Activated naive CD4-positive, alpha-beta T cell treated with anti-CD3 and anti-CD28 coated beads for 36 hours (primary cell): ENCODE measurements at regions of chr1 and their contacts with region 1.

Region 1: GRCh38 chr1:212035123-212035834 is at the starts of genes DTL and INTS7:
- DNase-seq: peak; percentile 99
- H3K4me3 Mint-ChIP-seq: peak within 1 kb of the TSS; percentile 96
- H3K27ac Mint-ChIP-seq: peak within 1 kb of the TSS; percentile 98
- H3K4me1 Mint-ChIP-seq: peaks cover 53% of the 10 kb centered on the region
- H3K27me3 Mint-ChIP-seq: peaks cover 6% of the 10 kb centered on the region
- total RNA-seq, gene DTL: 106 to 121 TPM
- total RNA-seq, gene INTS7: 24.7 to 25.9 TPM

Region 2: DNA sequence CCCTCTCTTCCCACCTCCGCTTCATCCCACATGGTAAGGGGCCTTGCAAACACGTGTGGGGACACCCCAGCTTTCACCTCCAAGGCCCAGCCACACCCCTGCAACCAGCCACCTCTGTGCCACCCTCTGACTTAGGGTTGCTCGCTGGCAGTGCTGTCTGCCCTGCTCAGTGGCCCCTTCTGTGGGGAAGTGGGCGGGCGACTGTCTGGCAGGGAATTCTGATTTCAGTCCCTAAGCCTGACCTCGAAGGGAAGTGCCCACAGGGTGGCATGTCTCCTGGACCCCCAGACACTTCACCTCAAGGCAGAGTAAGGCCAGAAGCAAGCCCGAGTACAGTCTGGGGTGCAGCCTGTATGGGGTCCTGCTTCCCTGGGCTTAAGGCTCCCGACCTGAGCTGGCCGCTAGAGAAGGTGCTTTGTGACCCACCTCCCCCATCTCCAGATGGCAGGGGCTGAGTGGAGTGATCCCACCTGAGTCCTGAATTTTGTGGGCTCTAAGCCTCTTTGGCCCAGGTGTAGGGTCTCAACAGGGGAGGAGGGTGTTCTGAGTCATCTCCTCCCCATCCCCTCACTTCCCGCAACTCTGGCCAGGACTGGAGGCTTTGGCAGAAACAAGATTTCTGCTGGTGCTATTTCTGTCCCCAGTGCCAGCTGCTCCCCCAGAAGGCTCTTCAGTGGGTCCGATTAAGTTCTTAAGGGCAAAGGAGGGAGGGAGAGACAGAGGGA is 550.4 kb before region 1 on chr1:
- CTCF ChIA-PET with region 1: no interaction called
- intact Hi-C with region 1: no loop called
- DNase-seq: no peak
- H3K4me3 Mint-ChIP-seq: no peak overlapping the region
- H3K27ac Mint-ChIP-seq: no peak overlapping the region
- H3K4me1 Mint-ChIP-seq: no peaks in the 10 kb centered on the region
- H3K27me3 Mint-ChIP-seq: peaks cover 3% of the 10 kb centered on the region

Region 3: GRCh38 chr1:211578640-211579433 is 456.4 kb before region 1 on chr1 and contains the start of gene SLC30A1:
- CTCF ChIA-PET with region 1: interaction called, 3 read pairs
- intact Hi-C with region 1: loop called (anchors 1 kb)
- DNase-seq: peak; percentile 99
- H3K4me3 Mint-ChIP-seq: peak within 1 kb of the TSS; percentile 90
- H3K27ac Mint-ChIP-seq: peak within 1 kb of the TSS; percentile 75
- H3K4me1 Mint-ChIP-seq: peaks cover 31% of the 10 kb centered on the region
- H3K27me3 Mint-ChIP-seq: no peaks in the 10 kb centered on the region
- total RNA-seq, gene SLC30A1: 4.4 to 4.7 TPM

Region 4: GRCh38 chr1:211830330-211831142 is 204.7 kb before region 1 on chr1 and contains the start of gene LPGAT1:
- CTCF ChIA-PET with region 1: interaction called, 7 read pairs
- intact Hi-C with region 1: loop called (anchors 2 kb)
- DNase-seq: peak; percentile 75
- H3K4me3 Mint-ChIP-seq: peak within 1 kb of the TSS; percentile 82
- H3K27ac Mint-ChIP-seq: peak within 1 kb of the TSS; percentile 75
- H3K4me1 Mint-ChIP-seq: peaks cover 47% of the 10 kb centered on the region
- H3K27me3 Mint-ChIP-seq: no peaks in the 10 kb centered on the region
- total RNA-seq, gene LPGAT1: 18.6 to 21.7 TPM

Region 5: GRCh38 chr1:212045981-212046380 is 10.7 kb after region 1 on chr1:
- CTCF ChIA-PET with region 1: interaction called, 11 read pairs
- intact Hi-C with region 1: no loop called
- DNase-seq: no peak
- H3K4me3 Mint-ChIP-seq: no peak overlapping the region
- H3K27ac Mint-ChIP-seq: no peak overlapping the region
- H3K4me1 Mint-ChIP-seq: peaks cover 10% of the 10 kb centered on the region
- H3K27me3 Mint-ChIP-seq: peaks cover under 1% of the 10 kb centered on the region

Region 6: DNA sequence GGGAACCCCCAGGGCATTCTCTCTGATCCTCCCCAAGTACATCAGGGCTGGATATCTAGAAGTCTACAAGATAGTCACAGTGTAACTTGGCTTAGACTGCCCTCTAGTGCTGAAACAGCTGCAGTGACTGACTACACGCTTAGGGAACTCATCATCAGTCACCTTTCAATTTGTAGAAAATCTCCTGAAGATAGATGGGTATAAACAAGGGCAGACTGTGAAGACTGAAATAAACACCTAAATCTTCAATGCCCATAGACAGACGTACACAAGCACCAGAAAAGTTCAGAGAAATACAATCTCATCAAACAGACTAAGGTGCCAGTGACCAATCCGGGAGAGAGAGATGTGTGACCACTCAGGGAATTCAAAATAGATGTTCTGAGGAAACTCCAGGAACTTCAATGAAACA is 332.8 kb after region 1 on chr1:
- CTCF ChIA-PET with region 1: interaction called, 7 read pairs
- intact Hi-C with region 1: loop called (anchors 1 kb)
- DNase-seq: peak; percentile 77
- H3K4me3 Mint-ChIP-seq: no peak overlapping the region
- H3K27ac Mint-ChIP-seq: no peak overlapping the region
- H3K4me1 Mint-ChIP-seq: no peaks in the 10 kb centered on the region
- H3K27me3 Mint-ChIP-seq: no peaks in the 10 kb centered on the region

Region 7: DNA sequence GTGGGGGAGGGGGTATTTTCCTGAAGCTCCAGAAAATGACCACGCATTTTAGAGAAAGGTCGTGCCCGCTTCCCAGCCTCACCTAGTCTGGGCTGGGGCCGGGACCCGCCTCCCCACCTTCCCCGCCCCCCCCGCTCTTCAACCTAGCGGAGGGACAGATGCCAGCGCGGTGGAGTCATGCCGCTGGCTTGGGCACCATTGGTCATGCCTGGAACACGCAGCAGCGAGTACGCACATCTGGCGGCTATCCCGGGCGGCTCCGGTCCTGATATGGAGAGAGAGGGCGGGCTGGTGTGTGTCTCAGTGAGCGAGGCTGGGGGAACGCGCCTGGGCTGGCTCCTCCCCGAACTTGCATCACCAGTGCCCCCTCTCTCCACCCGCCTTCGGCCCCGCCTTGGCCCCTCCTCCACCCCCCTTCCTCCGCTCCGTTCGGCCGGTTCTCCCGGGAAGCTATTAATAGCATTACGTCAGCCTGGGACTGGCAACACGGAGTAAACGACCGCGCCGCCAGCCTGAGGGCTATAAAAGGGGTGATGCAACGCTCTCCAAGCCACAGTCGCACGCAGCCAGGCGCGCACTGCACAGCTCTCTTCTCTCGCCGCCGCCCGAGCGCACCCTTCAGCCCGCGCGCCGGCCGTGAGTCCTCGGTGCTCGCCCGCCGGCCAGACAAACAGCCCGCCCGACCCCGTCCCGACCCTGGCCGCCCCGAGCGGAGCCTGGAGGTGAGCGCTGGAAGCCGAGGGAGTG is 573.1 kb after region 1 on chr1 and contains the start of gene ATF3:
- CTCF ChIA-PET with region 1: no interaction called
- intact Hi-C with region 1: loop called (anchors 2 kb)
- DNase-seq: peak; percentile 98
- H3K4me3 Mint-ChIP-seq: peak within 1 kb of the TSS; percentile 90
- H3K27ac Mint-ChIP-seq: peak within 1 kb of the TSS; percentile 92
- H3K4me1 Mint-ChIP-seq: peaks cover 52% of the 10 kb centered on the region
- H3K27me3 Mint-ChIP-seq: peaks cover 43% of the 10 kb centered on the region
- total RNA-seq, gene ATF3: 67.4 to 67.7 TPM